A549 (cell line): ENCODE measurements at regions of chr20 and their contacts with region 1.

Region 1: DNA sequence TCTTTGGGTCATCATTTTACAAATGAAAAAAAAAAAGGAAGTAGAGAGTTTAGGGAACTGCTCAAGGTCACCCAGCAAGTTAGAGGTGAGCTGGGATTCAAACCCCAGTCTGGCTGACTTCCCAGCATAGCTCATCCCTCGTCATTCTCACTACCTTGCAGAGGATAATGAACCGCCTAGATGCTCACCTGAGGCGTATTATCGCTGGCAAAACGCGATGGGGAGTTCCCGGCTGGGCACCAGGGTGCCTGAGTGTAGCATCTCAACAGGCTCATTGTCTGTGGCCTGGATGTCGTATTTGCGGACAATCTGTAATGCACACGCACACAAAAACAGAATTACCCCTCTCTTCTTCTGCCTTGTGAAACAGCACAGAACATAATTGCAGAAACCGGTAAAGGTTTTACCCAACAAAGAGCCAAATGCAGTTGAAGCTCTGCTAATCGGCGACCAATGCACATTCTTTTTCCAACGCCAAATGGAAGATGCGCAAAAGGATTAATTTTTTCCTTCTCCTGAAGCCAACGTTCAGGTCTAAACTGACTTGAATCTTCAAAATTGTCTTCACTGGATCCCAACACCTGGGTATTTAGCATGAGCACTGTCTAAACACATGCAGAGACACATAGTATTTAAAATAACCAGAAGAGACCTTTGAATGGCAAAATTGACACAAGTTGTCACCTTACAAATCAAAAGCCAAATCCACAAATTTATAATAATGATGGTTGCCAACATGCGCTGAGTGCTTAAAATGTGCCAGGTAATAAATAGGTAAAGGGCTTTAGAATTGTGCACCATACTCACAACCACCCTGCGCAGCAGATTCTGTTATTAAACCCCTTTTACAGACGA is 16.6 kb downstream of the CYP24A1 start:
- DNase-seq: peak in 1 of 2 experiments; percentile 61
- ATAC-seq: no peak
- H3K4me3 ChIP-seq: peak overlapping the region; percentile 5; the same call in 1 of the 3 replicates
- H3K27ac ChIP-seq: peak overlapping the region; percentile 93 to 100
- H3K4me1 ChIP-seq: peaks cover 100% of the 10 kb centered on the region
- CTCF ChIP-seq: no peak
- EP300 ChIP-seq: no peak
- POLR2A ChIP-seq: no peak
- RAD21 ChIP-seq: no peak

Region 2: DNA sequence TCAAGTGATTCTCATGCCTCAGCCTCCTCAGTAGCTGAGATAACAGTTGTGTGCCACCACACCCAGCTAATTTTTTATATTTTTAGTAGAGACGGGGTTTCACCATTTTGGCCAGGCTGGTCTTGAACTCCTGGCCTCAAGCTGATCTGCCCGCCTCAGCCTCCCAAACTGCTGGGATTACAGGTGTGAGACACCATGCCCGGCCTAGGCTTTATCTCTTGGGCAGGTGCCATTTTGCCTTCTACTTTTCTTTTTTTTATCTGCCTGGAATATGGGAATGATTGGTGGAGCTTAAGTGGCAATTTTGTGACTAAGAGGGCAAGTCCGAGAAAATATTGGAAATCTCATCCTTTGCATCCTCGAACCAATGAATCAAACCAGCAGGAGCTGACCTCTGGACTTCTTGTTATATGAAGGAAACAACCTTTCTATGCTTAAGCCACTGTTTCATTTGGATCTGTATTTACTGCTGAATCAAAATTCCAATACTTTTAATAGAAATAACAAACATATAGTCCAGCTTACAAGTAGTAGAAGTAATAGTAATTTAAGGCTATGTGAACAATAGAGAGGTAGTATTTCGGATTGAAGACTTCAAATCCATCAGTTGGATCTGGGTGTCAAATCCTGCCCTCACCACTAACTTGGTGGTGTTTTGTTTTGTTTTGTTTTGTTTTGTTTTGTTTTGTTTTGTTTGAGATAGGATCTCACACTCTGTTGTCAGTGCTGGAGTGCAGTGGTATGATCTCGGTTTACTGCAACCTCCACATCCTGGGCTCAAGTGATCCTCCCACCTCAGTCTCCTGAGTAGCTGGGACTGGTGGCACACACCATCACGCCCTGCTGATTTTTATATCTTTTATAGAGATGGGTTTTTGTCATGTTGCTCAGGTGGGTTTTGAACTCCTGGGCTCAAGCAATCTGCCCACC is 434.4 kb before region 1 on chr20:
- CTCF ChIA-PET with region 1: no interaction called
- POLR2A ChIA-PET with region 1: no interaction called
- DNase-seq: no peak
- ATAC-seq: no peak
- H3K4me3 ChIP-seq: no peak overlapping the region
- H3K27ac ChIP-seq: no peak overlapping the region
- H3K4me1 ChIP-seq: peaks cover 8% of the 10 kb centered on the region; the same call in 1 of the 3 replicates
- CTCF ChIP-seq: no peak
- EP300 ChIP-seq: no peak
- POLR2A ChIP-seq: no peak
- RAD21 ChIP-seq: no peak

Region 3: GRCh38 chr20:54115151-54115854 is 41.9 kb before region 1 on chr20:
- CTCF ChIA-PET with region 1: interaction called, 3 read pairs
- POLR2A ChIA-PET with region 1: interaction called, 20 read pairs
- DNase-seq: peak; percentile 77 to 92
- ATAC-seq: peak; percentile 84 to 88
- H3K4me3 ChIP-seq: no peak overlapping the region
- H3K27ac ChIP-seq: peak overlapping the region; percentile 94 to 98
- H3K4me1 ChIP-seq: peaks cover 76% of the 10 kb centered on the region
- CTCF ChIP-seq: no peak
- EP300 ChIP-seq: no peak
- POLR2A ChIP-seq: no peak
- RAD21 ChIP-seq: no peak

Region 4: DNA sequence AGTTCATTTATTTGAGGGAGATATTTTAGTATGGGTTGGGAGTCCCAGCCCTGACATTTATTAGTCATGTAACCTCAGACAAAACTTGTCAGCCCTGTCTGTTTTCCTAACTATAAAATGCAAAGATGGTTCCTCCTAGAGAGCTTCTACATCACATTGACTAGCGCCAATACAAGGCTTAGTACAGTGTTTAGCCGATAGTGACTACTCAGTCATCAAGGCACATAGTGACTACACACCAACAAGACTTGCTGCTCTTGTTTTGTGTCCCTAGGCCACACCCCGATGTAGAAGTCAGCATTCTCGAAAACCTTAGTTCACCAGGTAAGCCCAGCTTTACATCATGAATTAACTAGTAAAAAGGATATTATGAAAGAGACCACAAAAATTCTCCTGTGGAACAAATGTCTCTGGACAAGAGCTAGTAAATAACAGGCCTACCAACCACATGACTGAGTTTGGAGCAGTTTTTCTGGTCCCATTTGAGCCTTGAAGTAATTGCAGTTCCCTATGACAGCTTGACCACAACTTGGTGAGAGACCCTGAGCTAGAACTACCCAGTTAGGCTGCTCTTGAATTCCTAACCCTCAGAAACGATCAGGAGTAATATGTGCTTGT is 119.5 kb after region 1 on chr20:
- CTCF ChIA-PET with region 1: no interaction called
- POLR2A ChIA-PET with region 1: no interaction called
- DNase-seq: no peak
- ATAC-seq: no peak
- H3K4me3 ChIP-seq: no peak overlapping the region
- H3K27ac ChIP-seq: no peak overlapping the region
- H3K4me1 ChIP-seq: no peaks in the 10 kb centered on the region
- CTCF ChIP-seq: no peak
- EP300 ChIP-seq: no peak
- POLR2A ChIP-seq: no peak
- RAD21 ChIP-seq: no peak

Region 5: DNA sequence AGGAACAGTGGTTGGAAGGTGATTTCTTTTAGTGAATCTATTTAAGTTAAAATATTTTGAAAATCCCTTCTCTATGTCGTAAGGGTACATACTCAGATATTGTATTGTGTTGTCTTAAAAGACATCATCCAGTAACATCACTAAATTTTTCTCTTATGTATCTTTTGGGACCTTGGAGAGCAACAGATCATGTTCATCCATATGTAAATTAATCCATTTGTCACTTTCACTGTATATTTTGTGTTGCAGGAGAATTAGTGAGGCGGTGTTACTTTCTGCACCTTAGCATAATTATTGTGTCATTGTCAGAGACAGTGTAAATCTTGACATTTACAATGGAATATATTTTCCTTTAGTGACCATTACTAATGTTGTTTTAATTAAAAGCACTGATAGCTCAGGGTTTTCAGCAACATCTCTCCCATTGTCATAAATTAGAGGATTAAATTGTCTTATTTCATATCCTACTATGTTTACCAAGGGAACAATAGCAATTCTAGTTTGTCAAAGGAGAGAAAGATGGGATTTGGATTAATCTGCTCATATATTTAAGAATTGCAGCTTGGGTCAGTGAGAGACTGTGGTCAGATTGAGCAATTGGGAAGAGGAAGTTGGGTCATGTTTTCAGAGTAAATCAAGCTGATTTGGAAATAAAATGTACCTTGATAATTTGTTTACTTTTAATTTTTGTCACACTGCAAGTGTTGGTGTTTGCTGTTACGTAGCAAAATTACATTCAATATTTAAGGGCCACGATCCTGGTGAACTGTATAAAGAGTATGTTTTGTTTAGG is 340.9 kb after region 1 on chr20:
- CTCF ChIA-PET with region 1: no interaction called
- POLR2A ChIA-PET with region 1: no interaction called
- DNase-seq: no peak
- ATAC-seq: no peak
- H3K4me3 ChIP-seq: no peak overlapping the region
- H3K27ac ChIP-seq: no peak overlapping the region
- H3K4me1 ChIP-seq: no peaks in the 10 kb centered on the region
- CTCF ChIP-seq: no peak
- EP300 ChIP-seq: no peak
- POLR2A ChIP-seq: no peak
- RAD21 ChIP-seq: no peak